Mammary epithelial cell (primary cell): ENCODE measurements at regions of chr4 and their contacts with region 1.

Region 1: GRCh38 chr4:158172261-158173258 is at the start of gene GASK1B:
- DNase-seq: peak; percentile 42
- H3K4me3 ChIP-seq: peak within 1 kb of the TSS; percentile 67 to 80 (median 68)
- H3K27ac ChIP-seq: peak within 1 kb of the TSS; percentile 55
- H3K4me1 ChIP-seq: peaks cover 38% of the 10 kb centered on the region
- H3K27me3 ChIP-seq: no peaks in the 10 kb centered on the region
- CTCF ChIP-seq: peak; percentile 59 to 72
- total RNA-seq, gene GASK1B: 13.5 to 27.2 TPM

Region 2: GRCh38 chr4:157992038-157992705 is 180.4 kb before region 1 on chr4:
- CTCF ChIA-PET with region 1: interaction called, 3 read pairs
- dilution Hi-C with region 1: no loop called
- in situ Hi-C with region 1: loop called in 1 of 2 experiments (anchors 5 kb)
- intact Hi-C with region 1: loop called (anchors 1 kb)
- DNase-seq: peak; percentile 58
- H3K4me3 ChIP-seq: peak overlapping the region in 2 of 3 experiments; percentile 21 to 24
- H3K27ac ChIP-seq: no peak overlapping the region
- H3K4me1 ChIP-seq: no peaks in the 10 kb centered on the region
- H3K27me3 ChIP-seq: no peaks in the 10 kb centered on the region
- CTCF ChIP-seq: peak; percentile 50 to 57

Region 3: GRCh38 chr4:158003212-158003611 is 169.3 kb before region 1 on chr4:
- CTCF ChIA-PET with region 1: no interaction called
- dilution Hi-C with region 1: no loop called
- in situ Hi-C with region 1: loop called in 1 of 2 experiments (anchors 5 kb)
- intact Hi-C with region 1: no loop called
- DNase-seq: peak; percentile 12
- H3K4me3 ChIP-seq: no peak overlapping the region
- H3K27ac ChIP-seq: no peak overlapping the region
- H3K4me1 ChIP-seq: no peaks in the 10 kb centered on the region
- H3K27me3 ChIP-seq: no peaks in the 10 kb centered on the region
- CTCF ChIP-seq: no peak

Region 4: GRCh38 chr4:158020176-158020575 is 152.4 kb before region 1 on chr4:
- CTCF ChIA-PET with region 1: no interaction called
- dilution Hi-C with region 1: loop called (anchors 10 kb)
- in situ Hi-C with region 1: loop called in 1 of 2 experiments (anchors 10 kb)
- intact Hi-C with region 1: loop called (anchors 1 kb)
- DNase-seq: peak; percentile 82
- H3K4me3 ChIP-seq: peak overlapping the region in 1 of 3 experiments; percentile 18
- H3K27ac ChIP-seq: peak overlapping the region; percentile 50
- H3K4me1 ChIP-seq: peaks cover 39% of the 10 kb centered on the region
- H3K27me3 ChIP-seq: no peaks in the 10 kb centered on the region
- CTCF ChIP-seq: no peak

Region 5: DNA sequence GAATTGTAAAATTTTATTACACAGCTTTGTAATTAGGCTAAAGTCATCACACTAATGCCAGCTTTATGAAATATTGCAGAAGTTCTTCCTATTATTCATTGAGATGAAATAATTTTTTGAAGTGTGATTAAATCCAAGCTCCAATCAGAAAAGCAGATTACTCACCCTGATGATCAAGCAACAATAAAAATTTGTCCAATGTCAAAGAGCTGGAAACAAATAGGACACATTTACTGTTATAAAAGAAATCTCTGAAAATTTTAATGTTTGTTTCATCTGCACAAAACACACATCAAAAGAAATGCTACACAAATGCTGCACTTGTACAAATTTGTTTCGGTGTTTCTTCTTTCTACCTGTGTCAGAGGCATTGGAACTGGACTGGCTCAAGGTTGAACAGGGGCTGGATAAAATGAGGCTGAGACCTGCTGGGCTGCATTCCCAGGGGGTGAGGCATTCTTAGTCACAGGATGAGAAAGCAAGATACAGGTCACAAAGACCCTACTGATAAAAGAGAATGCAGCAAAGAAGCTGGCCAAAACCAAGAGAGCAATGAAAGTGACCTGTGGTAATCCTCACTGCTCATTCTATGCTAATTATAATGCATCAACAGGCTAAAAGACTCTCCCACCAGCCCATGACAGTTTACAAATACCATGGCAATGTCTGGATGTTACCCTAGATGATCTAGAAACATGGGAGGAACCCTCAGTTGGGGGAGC is 78.0 kb before region 1 on chr4:
- CTCF ChIA-PET with region 1: interaction called, 3 read pairs
- dilution Hi-C with region 1: no loop called
- in situ Hi-C with region 1: no loop called
- intact Hi-C with region 1: loop called (anchors 2 kb)
- DNase-seq: peak; percentile 93
- H3K4me3 ChIP-seq: peak overlapping the region in 2 of 3 experiments; percentile 9 to 23
- H3K27ac ChIP-seq: peak overlapping the region; percentile 74
- H3K4me1 ChIP-seq: peaks cover 25% of the 10 kb centered on the region
- H3K27me3 ChIP-seq: no peaks in the 10 kb centered on the region
- CTCF ChIP-seq: no peak

Region 6: GRCh38 chr4:158121187-158121586 is 51.4 kb before region 1 on chr4:
- CTCF ChIA-PET with region 1: no interaction called
- dilution Hi-C with region 1: no loop called
- in situ Hi-C with region 1: no loop called
- intact Hi-C with region 1: loop called (anchors 5 kb)
- DNase-seq: peak; percentile 57
- H3K4me3 ChIP-seq: no peak overlapping the region
- H3K27ac ChIP-seq: no peak overlapping the region
- H3K4me1 ChIP-seq: no peaks in the 10 kb centered on the region
- H3K27me3 ChIP-seq: no peaks in the 10 kb centered on the region
- CTCF ChIP-seq: no peak

Region 7: GRCh38 chr4:158253350-158253980 is 80.9 kb after region 1 on chr4:
- CTCF ChIA-PET with region 1: interaction called, 8 read pairs
- dilution Hi-C with region 1: no loop called
- in situ Hi-C with region 1: no loop called
- intact Hi-C with region 1: loop called (anchors 1 kb)
- DNase-seq: peak; percentile 43
- H3K4me3 ChIP-seq: no peak overlapping the region
- H3K27ac ChIP-seq: no peak overlapping the region
- H3K4me1 ChIP-seq: no peaks in the 10 kb centered on the region
- H3K27me3 ChIP-seq: no peaks in the 10 kb centered on the region
- CTCF ChIP-seq: peak; percentile 52 to 66